Right ventricle myocardium inferior (tissue), 1 donor: ENCODE measurements at regions of chr11 and their contacts with region 1.

Region 1: DNA sequence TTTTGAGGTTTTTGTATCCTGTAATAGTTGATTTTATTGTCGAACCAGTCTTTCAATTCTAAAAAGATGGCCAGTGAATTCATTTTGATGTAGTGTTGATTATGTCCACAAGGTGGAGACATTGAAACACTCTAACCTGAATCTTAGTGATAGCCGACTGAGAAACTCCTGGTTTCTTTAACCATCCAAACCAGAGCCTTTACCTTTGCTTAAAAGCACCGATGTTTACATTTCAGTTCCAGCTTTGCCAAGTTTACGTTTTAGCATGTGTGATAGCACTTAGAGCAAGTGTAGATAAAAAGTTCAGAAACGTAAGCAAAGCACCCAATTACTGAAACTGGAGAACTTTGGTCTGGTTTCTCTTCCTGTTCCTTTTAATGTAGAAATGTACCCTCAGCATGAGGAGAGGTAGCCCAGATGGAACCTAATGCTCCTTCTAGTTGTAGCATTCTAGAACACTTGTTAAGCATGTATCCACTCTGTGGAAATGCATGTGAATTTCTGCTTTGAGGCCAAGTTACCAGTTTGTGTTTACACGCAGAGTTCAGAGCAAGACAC is 208.6 kb downstream of the DBX1 start:
- DNase-seq: no peak
- ATAC-seq: no peak

Region 2: DNA sequence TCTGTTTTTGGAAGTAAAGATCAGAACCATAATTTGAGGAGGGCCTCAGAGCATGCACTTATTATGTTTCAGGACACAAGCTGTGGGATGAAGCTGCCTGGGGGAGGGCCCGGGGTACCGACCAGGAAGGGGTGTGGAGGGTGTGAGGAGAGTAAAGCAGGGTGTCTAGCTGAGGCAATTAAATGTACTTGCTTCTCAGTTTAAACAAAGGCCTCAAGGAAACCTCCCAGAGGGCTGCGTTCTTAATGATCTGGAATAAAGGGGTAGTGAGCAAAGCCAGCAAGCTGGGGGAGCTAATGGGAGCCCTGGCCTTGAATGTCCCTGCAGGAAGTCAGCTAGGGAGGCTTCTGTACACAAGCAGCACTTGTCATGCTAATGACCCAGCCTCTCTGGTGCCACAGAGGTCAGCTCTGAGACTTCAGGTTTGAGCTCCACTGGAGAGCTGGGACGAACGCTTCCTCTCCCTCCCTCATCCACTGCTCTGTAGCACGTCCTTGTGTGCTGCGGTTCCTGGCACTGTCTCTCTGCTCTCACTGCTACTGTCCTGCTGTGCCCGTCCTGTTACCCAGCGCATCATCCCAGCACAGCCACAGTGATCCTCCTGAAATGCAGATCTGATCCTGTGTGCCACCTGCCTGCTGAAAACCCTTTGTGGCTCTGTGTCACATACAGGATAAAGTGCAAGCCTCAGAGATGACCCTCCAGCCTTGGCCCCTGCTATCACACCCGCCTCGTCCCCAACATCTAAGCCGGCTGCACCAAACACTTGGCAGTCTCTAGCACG is 48.9 kb after region 1 on chr11:
- intact Hi-C with region 1: loop called (anchors 5 kb)
- DNase-seq: no peak
- ATAC-seq: peak; percentile 86

Region 3: GRCh38 chr11:20050551-20051333 is 99.1 kb after region 1 on chr11:
- intact Hi-C with region 1: loop called (anchors 2 kb)
- DNase-seq: no peak
- ATAC-seq: no peak

Region 4: GRCh38 chr11:20110908-20111669 is 159.5 kb after region 1 on chr11:
- intact Hi-C with region 1: loop called (anchors 2 kb)
- DNase-seq: no peak
- ATAC-seq: peak; percentile 42

Region 5: DNA sequence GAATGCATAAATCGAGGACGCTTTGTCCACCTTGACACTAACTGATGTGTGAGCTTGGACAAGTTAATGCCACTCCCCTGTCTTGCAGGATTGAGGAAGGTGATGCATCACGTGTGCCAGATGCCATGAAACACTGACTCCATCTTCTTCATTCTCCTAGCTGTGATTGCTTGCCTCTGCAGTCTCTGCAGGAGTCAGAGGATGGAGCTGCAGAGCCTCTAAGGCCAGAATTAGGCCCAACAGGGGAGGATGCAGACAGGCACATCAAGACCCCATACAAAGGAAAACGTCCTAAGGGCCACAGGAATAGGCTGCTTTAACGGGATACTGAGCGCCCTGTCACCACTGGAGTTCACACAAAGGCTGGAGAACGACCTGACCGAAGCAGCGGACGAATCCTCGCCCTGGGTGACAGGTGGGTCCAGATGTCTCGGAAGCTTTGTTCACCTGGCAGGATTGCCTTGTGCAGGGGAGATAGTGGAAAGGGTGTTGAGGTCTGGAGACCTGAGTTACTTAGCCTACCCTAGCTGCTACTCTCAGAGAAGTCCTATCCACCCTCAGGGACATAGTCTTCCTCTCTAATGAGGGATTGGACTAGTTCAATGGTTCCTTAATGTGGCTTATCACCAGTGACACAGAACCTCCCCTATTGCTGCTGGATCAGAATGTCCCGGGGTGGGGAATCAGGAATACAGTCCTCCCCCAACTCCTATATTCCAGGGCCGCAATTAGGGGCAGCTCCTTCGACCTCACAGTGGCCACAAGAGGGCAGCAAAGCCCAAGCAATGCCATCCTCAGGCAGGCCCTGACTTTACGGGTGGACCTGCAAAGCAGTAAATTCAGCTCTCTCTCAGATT is 176.3 kb after region 1 on chr11:
- intact Hi-C with region 1: loop called (anchors 2 kb)
- DNase-seq: peak; percentile 82
- ATAC-seq: peak; percentile 68

Region 6: DNA sequence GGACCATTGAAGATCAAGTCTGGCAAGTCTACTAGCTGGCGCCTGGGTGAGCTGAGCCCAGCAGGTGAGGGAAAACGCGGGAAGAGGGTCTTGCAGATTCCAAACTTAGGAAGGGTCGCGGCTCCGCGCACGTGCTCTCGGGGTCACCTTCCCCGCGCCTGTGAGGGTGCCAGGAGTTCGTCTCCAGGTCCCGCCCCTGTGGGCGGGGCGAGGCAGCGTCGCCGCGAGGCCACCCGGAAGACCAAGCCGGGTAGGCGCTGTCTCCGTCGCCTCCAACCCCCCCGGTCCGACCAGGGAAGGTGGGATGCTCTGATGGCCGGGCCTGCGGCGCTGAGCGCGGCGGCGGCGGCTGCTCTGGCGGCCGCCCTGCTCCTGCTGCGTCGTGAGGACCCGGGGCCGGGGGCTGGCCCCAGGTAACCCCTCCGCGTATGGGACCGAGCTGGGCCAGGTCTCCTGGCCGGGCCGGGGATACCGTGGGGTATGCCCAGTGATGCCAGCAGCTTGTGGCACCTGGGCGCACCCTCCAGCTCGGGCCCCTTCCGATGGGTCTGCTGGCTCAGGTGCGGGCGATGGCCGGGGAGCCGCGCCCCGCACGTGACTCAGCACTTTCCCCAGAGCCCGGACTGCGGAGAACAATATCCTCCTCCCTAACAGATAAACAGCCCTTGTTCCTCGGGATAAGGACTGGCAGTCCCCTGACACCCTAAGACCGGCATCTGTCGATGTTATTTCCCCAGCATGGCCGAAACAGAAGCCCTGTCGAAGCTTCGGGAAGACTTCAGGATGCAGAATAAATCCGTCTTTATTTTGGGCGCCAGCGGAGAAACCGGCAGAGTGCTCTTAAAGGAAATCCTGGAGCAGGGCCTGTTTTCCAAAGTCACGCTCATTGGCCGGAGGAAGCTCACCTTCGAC is 412.1 kb after region 1 on chr11 and contains the start of gene HTATIP2:
- intact Hi-C with region 1: loop called (anchors 5 kb)
- DNase-seq: peak; percentile 88
- ATAC-seq: peak; percentile 92
- total RNA-seq, gene HTATIP2: 23.4 TPM